RWPE1 (cell line): ENCODE measurements at regions of chr9 and their contacts with region 1.

Region 1: DNA sequence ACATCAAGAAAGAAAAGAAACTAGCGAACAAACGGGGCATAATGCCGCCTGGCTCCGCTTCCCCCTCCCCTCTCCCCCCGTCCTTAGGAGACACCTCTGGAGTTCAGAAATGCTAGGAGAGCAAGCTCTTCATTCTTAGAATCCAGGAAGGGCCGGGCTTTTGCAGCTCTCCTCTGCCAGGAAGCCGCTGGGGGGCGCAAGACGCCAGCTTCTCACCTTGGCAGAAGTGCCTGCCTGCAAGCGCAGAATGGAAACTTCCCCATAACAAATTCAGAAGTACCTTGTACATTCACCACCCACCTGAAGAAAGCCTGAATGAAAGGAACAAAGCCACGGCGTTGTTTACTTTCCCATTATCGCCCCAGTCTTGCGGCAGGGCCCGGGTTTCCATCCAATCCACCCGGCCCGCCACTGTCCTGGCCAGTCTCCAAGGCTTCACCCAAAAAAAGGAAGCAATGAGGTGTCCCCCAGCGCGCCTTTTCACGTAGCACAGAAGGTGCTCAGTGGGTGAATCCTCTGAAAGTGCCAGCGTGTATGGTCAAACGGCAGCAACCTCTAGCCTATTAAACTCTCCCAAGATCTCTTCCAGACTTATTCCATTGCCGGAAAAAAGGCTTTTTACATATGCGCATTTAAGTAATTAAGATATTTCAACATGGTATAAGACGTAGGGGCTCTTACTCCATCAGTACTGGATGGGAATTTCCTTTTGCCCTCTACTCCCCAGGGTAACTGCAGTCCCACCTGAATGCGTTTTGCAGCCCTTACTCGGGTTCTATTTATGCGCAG is 1.6 kb upstream of the GADD45G start:
- DNase-seq: peak; percentile 75
- H3K27ac ChIP-seq: no peak overlapping the region
- CTCF ChIP-seq: peak; percentile 71

Region 2: DNA sequence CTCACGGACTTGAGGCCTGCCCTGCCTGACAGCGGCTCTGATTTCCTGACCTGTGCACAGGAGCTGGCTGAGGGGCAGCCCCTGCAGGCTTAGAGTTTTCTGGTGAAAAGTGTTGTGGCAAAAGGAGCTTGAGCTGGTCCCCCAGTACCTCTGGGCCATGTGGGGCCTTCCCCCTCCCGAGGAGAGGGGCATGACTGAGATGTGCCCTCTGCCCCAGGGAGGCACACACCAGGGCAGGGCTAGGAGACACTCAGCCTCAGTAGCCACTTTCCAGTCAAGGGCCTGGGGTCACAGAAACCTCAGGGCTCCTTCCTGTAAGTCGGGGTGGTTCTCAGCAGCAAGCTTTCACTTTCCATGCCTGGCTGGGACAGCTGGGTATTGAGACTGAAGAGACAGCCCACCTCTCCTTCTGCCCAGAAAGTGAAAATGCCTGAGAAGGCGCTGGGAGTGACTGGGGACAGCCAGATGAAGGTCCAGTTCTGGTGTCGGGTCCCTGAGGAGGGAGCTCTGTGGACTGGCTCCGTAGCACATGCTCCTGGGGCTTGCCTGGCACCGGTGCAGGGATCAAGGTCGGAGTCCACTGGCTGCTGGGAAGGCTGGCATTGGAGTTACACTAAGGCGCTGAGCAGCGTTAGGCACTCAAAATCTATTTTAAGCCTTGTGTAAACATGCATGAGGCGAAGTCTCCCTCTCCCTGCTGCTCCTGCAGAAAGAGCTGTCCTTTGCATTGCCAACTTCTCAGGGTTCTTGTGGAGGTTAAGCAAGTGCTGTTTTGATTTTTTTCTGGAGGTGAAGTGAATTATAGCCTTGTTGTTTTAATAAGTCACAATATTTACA is 396.6 kb after region 1 on chr9:
- CTCF ChIA-PET with region 1: interaction called, 14 read pairs
- POLR2A ChIA-PET with region 1: no interaction called
- DNase-seq: no peak
- H3K27ac ChIP-seq: 0 out of 2 replicates have a peak overlapping the region, but pooled peaks have one; percentile 0
- CTCF ChIP-seq: no peak

Region 3: DNA sequence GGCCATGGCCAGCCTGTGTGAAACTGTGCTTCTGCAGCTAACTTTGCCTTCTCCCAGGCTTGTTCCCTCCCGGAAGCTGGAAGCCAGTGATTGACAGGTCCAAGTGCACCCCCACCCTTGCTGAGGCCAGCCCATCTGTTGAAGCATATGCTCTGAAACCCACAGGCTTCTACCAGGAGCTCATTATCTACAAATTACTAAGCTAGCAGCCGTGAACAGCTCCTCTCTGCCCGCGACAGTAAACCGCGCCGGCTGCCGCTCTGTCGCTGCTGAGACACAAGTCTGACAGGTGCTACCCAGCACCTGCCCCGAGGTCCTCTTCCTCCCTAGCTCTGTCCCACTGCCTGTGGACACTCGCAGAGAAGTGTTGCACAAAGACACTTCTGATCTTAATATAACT is 492.5 kb after region 1 on chr9:
- CTCF ChIA-PET with region 1: interaction called, 116 read pairs
- POLR2A ChIA-PET with region 1: no interaction called
- DNase-seq: no peak
- H3K27ac ChIP-seq: no peak overlapping the region
- CTCF ChIP-seq: no peak

Region 4: GRCh38 chr9:90102292-90102901 is 499.2 kb after region 1 on chr9:
- CTCF ChIA-PET with region 1: interaction called, 116 read pairs
- POLR2A ChIA-PET with region 1: no interaction called
- DNase-seq: peak; percentile 96
- H3K27ac ChIP-seq: no peak overlapping the region
- CTCF ChIP-seq: peak; percentile 69